ENCODE measurements at regions of chr2 and their contacts with region 1.

Region 1: DNA sequence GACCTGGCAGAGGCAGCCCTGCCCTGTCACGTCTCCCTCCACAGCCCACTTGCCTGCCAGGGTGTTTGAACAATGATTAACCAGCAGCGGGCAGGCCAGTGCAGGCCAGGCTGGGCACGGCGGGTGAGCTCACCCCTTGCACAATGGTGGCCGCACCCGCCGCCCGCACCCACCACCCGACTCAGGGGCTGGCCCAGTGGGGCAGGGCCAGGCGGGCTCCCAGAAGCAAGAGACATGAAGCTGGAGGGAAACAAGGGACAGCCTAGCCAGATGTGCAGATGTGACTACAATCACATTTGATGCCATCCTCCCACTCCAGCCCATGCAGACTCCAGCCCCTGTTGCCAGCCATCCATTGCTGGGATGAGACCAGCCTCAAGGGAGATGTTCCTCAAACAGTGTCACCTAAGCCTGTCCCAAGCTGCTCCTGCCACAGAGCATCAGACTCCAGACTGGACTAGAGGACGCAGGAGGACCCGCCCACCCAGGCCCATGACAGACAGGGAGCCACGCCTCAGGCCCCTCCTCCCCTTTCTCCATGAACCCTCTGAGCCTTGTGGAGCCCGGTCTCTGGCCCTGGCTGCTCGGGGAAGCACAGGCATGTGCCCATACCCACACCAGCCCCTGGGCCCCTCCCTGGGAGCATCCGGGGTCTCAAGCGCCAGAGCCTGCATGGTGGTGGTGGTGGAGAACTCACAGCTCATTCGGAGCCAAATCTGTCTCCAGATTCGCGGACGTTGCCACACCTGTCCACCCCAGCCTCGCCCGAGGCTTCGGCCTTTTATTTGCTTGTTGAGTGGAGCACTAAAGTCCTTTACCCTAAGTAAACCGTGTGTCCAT is 45.0 kb downstream of the SDC1 start:
- DNase-seq: peak; percentile 94 to 95
- ATAC-seq: peak; percentile 73 to 85
- H3K4me3 ChIP-seq: no peak overlapping the region
- H3K27ac ChIP-seq: peak overlapping the region; percentile 90 to 98
- H3K4me1 ChIP-seq: peaks cover 67% of the 10 kb centered on the region
- CTCF ChIP-seq: no peak; the same call in 2 of the 3 replicates
- EP300 ChIP-seq: peak in 1 of 2 experiments; percentile 40; a peak in 1 of 5 replicates
- POLR2A ChIP-seq: peak; percentile 57
- RAD21 ChIP-seq: peak; percentile 39 to 65; a peak in 4 of 5 replicates

Region 2: DNA sequence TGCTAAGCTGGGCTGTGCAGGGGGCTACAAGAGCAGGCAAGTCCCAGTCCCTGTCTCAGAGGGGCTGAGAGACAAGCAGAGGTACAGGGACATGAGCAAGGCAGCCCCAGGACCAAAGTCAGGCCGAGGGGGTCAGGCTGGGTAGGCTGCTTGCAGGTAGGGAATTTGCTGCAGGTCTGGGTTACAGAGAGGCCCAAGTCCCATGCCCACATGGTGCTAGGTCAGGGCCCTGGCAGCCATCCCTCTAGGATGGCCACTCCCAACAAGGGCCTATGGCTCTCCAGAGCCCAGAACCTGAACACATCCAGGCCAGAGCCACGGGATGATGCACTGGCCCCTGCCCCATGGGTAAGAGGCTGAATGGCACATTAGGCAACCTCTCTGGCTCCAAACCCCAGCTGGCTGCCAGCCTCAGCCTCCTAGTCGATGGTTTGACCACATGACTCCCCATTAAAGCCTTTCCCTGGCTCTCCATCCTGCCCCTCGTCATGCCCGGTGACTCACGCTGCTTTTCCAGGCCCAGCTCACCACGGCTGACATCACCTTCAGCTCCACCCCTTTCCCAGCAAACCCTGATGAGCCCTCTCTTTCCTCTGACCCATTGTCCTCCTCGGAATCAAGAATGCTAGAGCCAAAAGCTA is 38.7 kb before region 1 on chr2:
- CTCF ChIA-PET with region 1: interaction called, 115 read pairs
- POLR2A ChIA-PET with region 1: interaction called, 10 read pairs
- DNase-seq: peak; percentile 90 to 95
- ATAC-seq: peak; percentile 90 to 91
- H3K4me3 ChIP-seq: no peak overlapping the region
- H3K27ac ChIP-seq: peak overlapping the region; percentile 71 to 84
- H3K4me1 ChIP-seq: peaks cover 57% of the 10 kb centered on the region
- CTCF ChIP-seq: no peak
- EP300 ChIP-seq: no peak
- POLR2A ChIP-seq: no peak
- RAD21 ChIP-seq: no peak

Region 3: DNA sequence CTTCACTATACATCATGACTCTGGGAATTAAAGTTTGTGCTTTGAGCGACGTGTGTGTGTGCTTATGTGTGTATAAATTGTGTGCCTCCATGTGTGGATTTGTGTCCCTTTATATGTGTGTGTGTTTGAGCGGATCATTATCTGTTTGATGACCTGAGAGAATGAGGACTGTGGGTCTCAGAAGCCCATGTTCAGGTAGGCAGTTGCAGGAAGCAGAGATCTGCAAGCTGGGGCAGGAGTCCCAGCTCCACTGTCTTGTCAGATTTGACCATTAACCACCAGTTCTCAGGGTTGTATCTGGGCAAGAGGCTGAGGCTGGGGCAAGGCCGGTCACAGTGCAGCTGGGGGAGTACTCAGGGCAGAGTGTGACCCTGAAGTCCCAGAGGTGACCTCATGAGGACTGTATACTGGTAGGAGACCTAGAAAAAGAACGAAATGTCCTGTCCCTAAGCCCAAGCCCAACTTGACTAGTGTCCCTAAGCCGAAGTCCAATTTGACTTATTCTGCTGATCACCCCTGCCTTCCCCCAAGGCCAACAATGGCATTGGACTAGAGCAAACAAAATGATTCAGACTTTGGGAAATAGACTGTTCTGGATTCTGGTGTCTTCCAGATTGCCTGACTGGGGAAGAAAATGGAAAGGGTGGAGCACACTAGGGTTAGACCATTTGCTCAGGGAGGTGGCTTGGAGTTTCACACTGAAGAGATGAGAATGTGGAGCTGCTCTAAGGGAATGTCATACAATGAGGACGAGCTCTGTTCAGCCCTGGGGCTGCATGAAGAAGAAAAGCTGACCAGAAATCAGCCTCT is 295.0 kb after region 1 on chr2:
- CTCF ChIA-PET with region 1: no interaction called
- POLR2A ChIA-PET with region 1: no interaction called
- DNase-seq: no peak
- ATAC-seq: peak in 1 of 2 experiments; percentile 19; a peak in 3 of 6 replicates
- H3K4me3 ChIP-seq: no peak overlapping the region
- H3K27ac ChIP-seq: peak overlapping the region in 1 of 2 experiments; percentile 16; a peak in 1 of 6 replicates
- H3K4me1 ChIP-seq: 0 out of 3 replicates have a peak, but pooled peaks cover 4% of the 10 kb centered on the region
- CTCF ChIP-seq: no peak
- EP300 ChIP-seq: no peak
- POLR2A ChIP-seq: no peak
- RAD21 ChIP-seq: no peak

Measured in A549 (cell line).